ENCODE measurements at regions of chr2 and their contacts with region 1.

Region 1: GRCh38 chr2:195930082-195930481 is 138.6 kb downstream of the DNAH7 start:
- DNase-seq: no peak
- H3K4me3 ChIP-seq: no peak overlapping the region
- H3K27ac ChIP-seq: no peak overlapping the region
- H3K4me1 ChIP-seq: no peaks in the 10 kb centered on the region
- H3K27me3 ChIP-seq: no peaks in the 10 kb centered on the region
- CTCF ChIP-seq: no peak
- POLR2A ChIP-seq: no peak

Region 2: DNA sequence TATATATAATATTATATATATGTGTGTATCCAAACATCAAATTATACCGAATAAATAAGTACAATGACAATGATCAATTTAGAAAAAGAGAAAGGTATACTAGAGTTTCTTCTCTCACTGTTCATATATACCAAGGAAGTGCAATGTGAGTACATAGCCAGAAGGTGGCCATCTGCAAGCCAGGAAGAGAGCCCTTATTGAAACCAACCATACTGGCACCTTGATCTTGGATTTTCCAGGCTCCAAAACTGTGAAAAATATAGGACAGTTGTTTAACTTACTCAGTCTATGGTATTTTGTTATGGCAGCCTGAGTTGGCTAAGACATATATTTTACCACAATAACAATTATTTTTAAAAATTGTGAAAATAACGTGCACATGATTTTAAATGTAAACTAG is 1763.3 kb before region 1 on chr2:
- CTCF ChIA-PET with region 1: no interaction called
- POLR2A ChIA-PET with region 1: no interaction called
- dilution Hi-C with region 1: no loop called
- intact Hi-C with region 1: loop called (anchors 10 kb)
- DNase-seq: peak; percentile 6
- H3K4me3 ChIP-seq: no peak overlapping the region
- H3K27ac ChIP-seq: no peak overlapping the region
- H3K4me1 ChIP-seq: no peaks in the 10 kb centered on the region
- H3K27me3 ChIP-seq: no peaks in the 10 kb centered on the region
- CTCF ChIP-seq: peak; percentile 27 to 38
- POLR2A ChIP-seq: no peak

Region 3: DNA sequence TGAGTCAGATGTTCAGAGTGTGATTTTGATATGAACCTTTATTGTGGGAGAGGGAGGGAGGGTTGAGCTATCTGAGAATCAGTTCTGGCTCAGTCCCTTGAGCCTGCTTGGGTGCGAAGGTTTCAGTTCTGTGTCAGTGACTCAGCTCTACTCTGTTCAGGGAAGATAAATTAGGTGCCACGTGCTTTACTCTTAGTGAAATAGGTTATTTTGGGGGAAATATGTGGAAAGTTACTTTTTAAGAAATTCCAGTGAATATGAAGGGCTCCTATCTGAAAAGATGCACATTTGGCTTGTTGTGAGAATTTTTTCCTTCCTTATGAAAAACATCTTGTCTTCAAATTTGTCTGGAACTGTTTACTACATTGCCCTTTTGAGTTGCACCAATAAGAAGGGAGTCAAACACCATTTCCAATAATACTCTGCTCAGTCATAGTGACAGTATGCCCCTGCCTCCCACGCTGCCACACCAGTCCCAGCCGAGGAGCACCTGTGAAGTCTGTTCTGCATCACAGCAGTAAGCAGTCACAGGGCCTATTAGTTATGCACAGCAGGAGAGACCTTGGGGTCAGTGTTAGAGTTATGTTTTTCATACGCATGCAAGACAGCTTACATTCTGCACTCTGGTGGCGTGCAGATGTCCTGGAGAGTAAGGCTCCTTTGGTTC is 171.4 kb after region 1 on chr2:
- CTCF ChIA-PET with region 1: no interaction called
- POLR2A ChIA-PET with region 1: no interaction called
- dilution Hi-C with region 1: no loop called
- intact Hi-C with region 1: no loop called
- DNase-seq: no peak
- H3K4me3 ChIP-seq: no peak overlapping the region
- H3K27ac ChIP-seq: no peak overlapping the region
- H3K4me1 ChIP-seq: peaks cover 12% of the 10 kb centered on the region
- H3K27me3 ChIP-seq: peaks cover 0 to 2% of the 10 kb centered on the region in 2 experiments
- CTCF ChIP-seq: no peak
- POLR2A ChIP-seq: no peak